ENCODE measurements at regions of chr3 and their contacts with region 1.

Region 1: DNA sequence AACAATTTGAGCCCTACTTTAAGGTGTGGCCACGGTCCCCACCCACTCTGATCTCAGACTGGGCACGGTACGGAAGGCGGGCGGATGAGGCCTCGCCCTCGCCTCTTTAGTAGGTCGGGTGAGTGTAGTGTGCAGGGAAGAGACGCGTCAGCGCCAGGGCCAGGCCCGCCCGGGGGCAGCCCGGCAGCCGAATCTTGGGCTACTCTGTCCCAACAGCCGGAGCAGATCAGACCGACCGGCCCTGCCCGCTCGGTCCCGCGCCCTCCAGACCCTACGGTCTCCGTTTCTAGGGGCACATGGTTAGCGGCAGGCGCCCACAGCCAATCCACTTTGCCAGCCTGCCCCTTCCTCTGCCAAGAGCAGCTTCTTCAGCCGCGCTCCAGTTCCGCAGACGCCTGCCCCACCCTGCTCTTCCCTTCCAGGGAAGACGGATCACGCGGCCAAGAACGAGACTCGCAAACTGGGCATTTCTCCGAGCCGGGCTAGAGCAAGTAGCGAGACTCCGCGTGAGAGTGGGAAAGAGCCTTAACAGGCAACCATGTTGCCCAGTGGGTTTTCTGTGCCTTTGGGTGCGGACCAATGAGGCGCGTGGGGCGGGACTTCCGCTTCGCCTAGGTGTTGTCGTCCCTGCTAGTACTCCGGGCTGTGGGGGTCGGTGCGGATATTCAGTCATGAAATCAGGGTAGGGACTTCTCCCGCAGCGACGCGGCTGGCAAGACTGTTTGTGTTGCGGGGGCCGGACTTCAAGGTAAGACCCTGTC is at the start of gene RNF13:
- DNase-seq: peak; percentile 88
- H3K4me3 ChIP-seq: peak within 1 kb of the TSS; percentile 77
- H3K27me3 ChIP-seq: no peaks in the 10 kb centered on the region
- CTCF ChIP-seq: no peak
- polyA plus RNA-seq, gene RNF13: 30.7 and 54.1 TPM in 2 replicates

Region 2: DNA sequence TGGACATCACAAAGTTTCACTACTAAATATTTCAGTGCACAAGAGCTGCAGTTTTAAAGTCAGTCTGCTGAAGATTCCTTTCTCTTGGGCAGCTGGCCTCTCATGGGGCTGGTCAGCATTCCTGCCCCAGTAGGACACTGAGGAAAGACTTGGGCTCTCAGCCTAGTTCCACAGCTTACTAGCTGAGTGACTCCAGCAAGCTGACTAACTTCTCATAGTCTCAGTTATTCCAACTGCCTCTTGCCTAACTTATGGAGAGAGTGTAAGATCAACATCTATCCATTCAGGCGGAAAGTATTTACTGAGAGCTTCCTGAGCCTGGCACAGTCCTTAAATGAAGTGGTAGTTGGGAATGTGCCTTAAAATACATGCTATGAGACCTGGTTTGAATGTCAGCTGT is 311.3 kb before region 1 on chr3:
- CTCF ChIA-PET with region 1: interaction called, 20 read pairs
- POLR2A ChIA-PET with region 1: no interaction called
- DNase-seq: peak; percentile 49
- H3K4me3 ChIP-seq: no peak overlapping the region
- H3K27me3 ChIP-seq: no peaks in the 10 kb centered on the region
- CTCF ChIP-seq: no peak

Region 3: DNA sequence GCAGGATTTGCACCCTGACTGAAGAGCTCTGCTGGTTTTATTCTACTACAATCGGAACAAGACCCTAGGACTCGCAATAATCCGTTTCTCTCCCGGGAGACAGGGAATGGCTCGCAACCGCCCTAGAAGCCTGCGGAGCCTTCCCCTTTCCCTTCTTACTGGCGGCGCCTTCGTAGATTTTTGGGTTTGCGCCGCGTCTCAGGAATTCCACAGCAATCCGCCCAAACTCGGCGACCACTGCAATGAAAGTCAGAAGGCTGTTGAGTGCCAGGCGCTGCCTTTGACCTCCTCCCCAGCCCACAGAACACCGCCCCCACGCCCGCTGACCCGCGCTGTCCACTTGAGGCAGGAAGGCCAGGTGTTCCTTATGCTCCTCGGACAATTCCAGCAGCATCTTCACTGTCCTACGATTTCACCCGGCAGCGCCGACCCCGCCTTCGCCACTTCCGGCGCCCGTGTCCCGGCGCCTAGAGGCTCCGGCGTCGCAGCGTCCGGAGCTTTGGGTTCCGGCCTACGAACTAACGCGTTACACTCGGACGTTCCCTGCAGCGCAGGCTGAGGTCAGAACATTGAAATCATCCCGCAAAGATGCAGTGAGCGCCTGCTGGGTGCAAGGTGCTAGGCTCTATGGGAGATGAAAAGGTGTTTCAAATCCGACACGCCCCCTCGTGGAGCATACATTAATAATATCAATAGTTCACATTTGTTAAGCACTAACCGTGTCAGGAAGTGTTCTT is 60.6 kb before region 1 on chr3 and contains the start of gene COMMD2:
- CTCF ChIA-PET with region 1: interaction called, 15 read pairs
- POLR2A ChIA-PET with region 1: no interaction called
- DNase-seq: peak; percentile 24
- H3K4me3 ChIP-seq: peak within 1 kb of the TSS; percentile 80
- H3K27me3 ChIP-seq: no peaks in the 10 kb centered on the region
- CTCF ChIP-seq: peak; percentile 13; the same call in 1 of the 2 replicates
- polyA plus RNA-seq, gene COMMD2: 31.2 and 39.8 TPM in 2 replicates

Region 4: DNA sequence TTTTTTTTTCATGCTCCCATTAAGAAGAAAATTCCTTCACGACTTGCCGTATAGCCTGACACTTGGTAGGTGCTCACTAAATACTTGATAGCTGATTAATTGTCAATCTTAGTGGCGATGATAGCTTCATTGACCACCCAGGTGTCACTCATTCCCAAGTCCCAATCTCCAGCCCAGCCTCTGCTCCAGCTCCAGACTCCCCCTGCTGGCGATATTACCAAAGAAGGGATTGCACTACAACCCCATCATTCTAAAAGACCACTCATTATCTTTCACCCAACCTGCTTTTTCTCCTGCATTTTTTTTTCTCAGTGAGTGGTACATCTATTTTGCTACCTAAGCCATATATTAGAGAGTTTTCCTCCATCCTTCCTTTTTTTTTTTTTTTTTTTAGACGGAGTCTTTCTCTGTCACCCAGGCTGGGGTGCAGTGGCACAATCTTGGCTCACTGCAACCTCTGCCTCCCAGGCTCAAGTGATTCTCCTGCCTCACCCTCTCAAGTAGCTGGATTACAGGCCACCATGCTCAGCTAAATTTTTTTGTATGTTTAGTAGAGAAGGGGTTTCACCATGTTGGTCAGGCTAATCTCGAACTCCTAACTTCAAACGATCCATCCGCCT is 41.0 kb before region 1 on chr3:
- CTCF ChIA-PET with region 1: interaction called, 167 read pairs
- POLR2A ChIA-PET with region 1: interaction called, 3 read pairs
- DNase-seq: no peak
- H3K4me3 ChIP-seq: no peak overlapping the region
- H3K27me3 ChIP-seq: no peaks in the 10 kb centered on the region
- CTCF ChIP-seq: peak; percentile 81

Region 5: GRCh38 chr3:149783576-149783975 is 29.2 kb before region 1 on chr3:
- CTCF ChIA-PET with region 1: interaction called, 16 read pairs
- POLR2A ChIA-PET with region 1: no interaction called
- DNase-seq: no peak
- H3K4me3 ChIP-seq: no peak overlapping the region
- H3K27me3 ChIP-seq: no peaks in the 10 kb centered on the region
- CTCF ChIP-seq: no peak

Region 6: DNA sequence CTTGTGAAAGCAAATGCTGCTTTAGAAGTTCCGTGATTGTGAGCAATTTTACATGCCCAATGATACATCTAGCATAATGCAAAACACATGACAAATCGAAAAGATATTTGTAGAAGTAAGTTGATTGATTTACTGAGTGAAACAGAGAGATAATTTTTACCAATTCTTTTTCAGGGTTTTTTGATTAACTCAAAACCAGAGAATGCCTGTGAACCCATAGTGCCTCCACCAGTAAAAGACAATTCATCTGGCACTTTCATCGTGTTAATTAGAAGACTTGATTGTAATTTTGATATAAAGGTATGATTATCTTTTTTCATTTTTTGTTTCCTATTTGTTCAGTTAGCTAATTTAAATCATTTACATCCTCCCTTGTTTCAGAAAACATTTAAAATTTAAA is 59.1 kb after region 1 on chr3:
- CTCF ChIA-PET with region 1: no interaction called
- POLR2A ChIA-PET with region 1: no interaction called
- DNase-seq: no peak
- H3K4me3 ChIP-seq: no peak overlapping the region
- H3K27me3 ChIP-seq: no peaks in the 10 kb centered on the region
- CTCF ChIP-seq: no peak

Measured in BJ (cell line).